OCI-LY7 (cell line): ENCODE measurements at regions of chr14 and their contacts with region 1.

Region 1: GRCh38 chr14:52272375-52272774 is 4.9 kb downstream of the PTGDR start:
- DNase-seq: peak; percentile 45
- H3K4me3 ChIP-seq: no peak overlapping the region
- H3K27ac ChIP-seq: no peak overlapping the region
- H3K4me1 ChIP-seq: no peaks in the 10 kb centered on the region
- CTCF ChIP-seq: peak; percentile 65

Region 2: DNA sequence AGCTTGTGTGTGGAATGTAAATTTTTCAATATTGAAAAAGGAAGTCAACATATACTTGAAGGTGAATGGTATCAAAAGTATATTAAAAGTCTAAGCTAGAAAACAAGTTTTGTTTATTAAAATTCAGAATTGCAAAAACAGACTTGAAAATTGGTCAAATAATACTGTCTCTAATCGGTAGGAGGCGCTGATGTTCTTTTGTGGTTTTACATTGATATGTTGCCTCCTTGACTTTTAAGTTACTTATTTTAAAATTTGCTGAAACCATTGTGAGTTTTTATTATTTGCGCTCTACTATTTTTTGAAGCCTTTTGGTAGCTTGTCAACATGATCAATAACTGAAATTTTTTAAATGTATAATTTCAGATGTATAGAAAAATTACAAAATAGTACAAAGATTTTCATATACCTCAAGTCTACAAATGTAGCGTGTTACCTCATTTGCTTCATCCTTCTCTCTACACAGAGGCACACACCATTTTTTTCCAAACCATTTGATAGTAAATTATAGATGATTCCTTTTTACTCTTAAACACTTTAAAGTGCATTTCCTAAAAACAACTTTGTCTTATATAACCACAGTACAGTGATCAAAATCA is 276.1 kb before region 1 on chr14:
- CTCF ChIA-PET with region 1: no interaction called
- POLR2A ChIA-PET with region 1: no interaction called
- intact Hi-C with region 1: loop called (anchors 5 kb)
- DNase-seq: peak; percentile 16
- H3K4me3 ChIP-seq: no peak overlapping the region
- H3K27ac ChIP-seq: no peak overlapping the region
- H3K4me1 ChIP-seq: peaks cover 12% of the 10 kb centered on the region
- CTCF ChIP-seq: peak; percentile 79

Region 3: GRCh38 chr14:52146504-52146903 is 125.9 kb before region 1 on chr14:
- CTCF ChIA-PET with region 1: no interaction called
- POLR2A ChIA-PET with region 1: no interaction called
- intact Hi-C with region 1: loop called (anchors 5 kb)
- DNase-seq: no peak
- H3K4me3 ChIP-seq: no peak overlapping the region
- H3K27ac ChIP-seq: no peak overlapping the region
- H3K4me1 ChIP-seq: no peaks in the 10 kb centered on the region
- CTCF ChIP-seq: peak; percentile 32; the same call in 1 of the 2 replicates

Region 4: DNA sequence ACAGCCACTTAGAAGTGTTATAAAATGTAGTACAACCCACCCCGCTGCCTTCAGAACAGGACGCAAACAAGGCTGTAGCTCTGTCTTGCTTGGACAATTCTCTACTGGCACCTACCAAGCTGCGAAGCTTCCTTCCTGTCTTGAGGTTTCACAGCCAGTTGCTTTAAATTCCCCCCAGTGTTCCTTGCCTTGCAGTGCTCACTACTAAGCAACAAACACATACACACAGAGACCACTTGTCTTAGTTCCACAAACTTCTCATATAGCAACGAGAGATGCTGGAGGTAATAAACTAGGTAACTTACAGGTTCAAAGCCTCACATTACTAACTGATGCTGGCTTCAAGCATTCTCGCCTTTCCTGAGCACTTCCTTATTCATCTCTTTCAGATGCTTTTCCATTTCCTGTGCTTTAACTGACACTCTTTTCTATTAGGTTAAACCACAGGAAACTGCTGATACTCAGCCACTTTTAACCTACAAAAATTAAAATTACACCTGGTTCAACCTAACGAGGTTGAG is 96.3 kb before region 1 on chr14:
- CTCF ChIA-PET with region 1: no interaction called
- POLR2A ChIA-PET with region 1: no interaction called
- intact Hi-C with region 1: loop called (anchors 5 kb)
- DNase-seq: peak; percentile 87
- H3K4me3 ChIP-seq: peak overlapping the region; percentile 39
- H3K27ac ChIP-seq: peak overlapping the region; percentile 91
- H3K4me1 ChIP-seq: peaks cover 30% of the 10 kb centered on the region
- CTCF ChIP-seq: no peak

Region 5: GRCh38 chr14:52299692-52300278 is 27.4 kb after region 1 on chr14:
- CTCF ChIA-PET with region 1: no interaction called
- POLR2A ChIA-PET with region 1: no interaction called
- intact Hi-C with region 1: no loop called
- DNase-seq: peak; percentile 57
- H3K4me3 ChIP-seq: no peak overlapping the region
- H3K27ac ChIP-seq: no peak overlapping the region
- H3K4me1 ChIP-seq: no peaks in the 10 kb centered on the region
- CTCF ChIP-seq: peak; percentile 87

Region 6: DNA sequence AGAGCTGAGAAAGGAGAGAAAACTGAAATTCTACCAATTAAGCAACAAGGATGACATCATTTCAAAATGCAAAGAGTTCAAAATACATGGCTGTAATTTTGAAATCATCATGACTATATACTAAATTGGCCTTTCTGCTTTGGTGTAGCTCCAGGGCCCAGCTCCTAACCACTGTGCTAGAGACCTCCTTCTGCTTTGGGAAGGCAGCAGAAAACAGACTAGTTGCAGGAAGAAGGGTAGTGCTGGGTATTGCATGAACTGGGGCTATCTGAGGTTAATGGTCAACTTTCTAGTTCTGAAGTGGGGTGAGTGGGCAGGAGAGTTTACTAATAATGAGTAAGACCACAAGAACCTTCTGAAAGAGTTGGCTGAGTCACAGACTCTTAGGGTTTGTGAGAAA is 107.9 kb after region 1 on chr14:
- CTCF ChIA-PET with region 1: no interaction called
- POLR2A ChIA-PET with region 1: no interaction called
- intact Hi-C with region 1: no loop called
- DNase-seq: no peak
- H3K4me3 ChIP-seq: no peak overlapping the region
- H3K27ac ChIP-seq: no peak overlapping the region
- H3K4me1 ChIP-seq: no peaks in the 10 kb centered on the region
- CTCF ChIP-seq: no peak